ENCODE measurements at regions of chr11 and their contacts with region 1.

Region 1: GRCh38 chr11:11977206-11977938 is 31.1 kb downstream of the DKK3 start:
- DNase-seq: peak; percentile 86
- H3K4me3 Mint-ChIP-seq: peak overlapping the region; percentile 53
- H3K27ac Mint-ChIP-seq: peak overlapping the region; percentile 86
- H3K4me1 Mint-ChIP-seq: peaks cover 39% of the 10 kb centered on the region
- H3K27me3 Mint-ChIP-seq: no peaks in the 10 kb centered on the region
- CTCF ChIP-seq: no peak

Region 2: GRCh38 chr11:11894486-11894885 is 82.9 kb before region 1 on chr11:
- CTCF ChIA-PET with region 1: no interaction called
- POLR2A ChIA-PET with region 1: no interaction called
- intact Hi-C with region 1: no loop called
- DNase-seq: no peak
- H3K4me3 Mint-ChIP-seq: no peak overlapping the region
- H3K27ac Mint-ChIP-seq: no peak overlapping the region
- H3K4me1 Mint-ChIP-seq: peaks cover 7% of the 10 kb centered on the region
- H3K27me3 Mint-ChIP-seq: no peaks in the 10 kb centered on the region
- CTCF ChIP-seq: no peak

Region 3: GRCh38 chr11:11966826-11967668 is 10.3 kb before region 1 on chr11:
- CTCF ChIA-PET with region 1: interaction called, 18 read pairs
- POLR2A ChIA-PET with region 1: interaction called, 3 read pairs
- intact Hi-C with region 1: no loop called
- DNase-seq: peak; percentile 75
- H3K4me3 Mint-ChIP-seq: no peak overlapping the region
- H3K27ac Mint-ChIP-seq: no peak overlapping the region
- H3K4me1 Mint-ChIP-seq: peaks cover 5% of the 10 kb centered on the region
- H3K27me3 Mint-ChIP-seq: no peaks in the 10 kb centered on the region
- CTCF ChIP-seq: peak; percentile 79

Region 4: GRCh38 chr11:11993839-11994238 is 16.5 kb after region 1 on chr11:
- CTCF ChIA-PET with region 1: interaction called, 6 read pairs
- POLR2A ChIA-PET with region 1: interaction called, 20 read pairs
- intact Hi-C with region 1: no loop called
- DNase-seq: peak; percentile 93
- H3K4me3 Mint-ChIP-seq: peak overlapping the region; percentile 42
- H3K27ac Mint-ChIP-seq: peak overlapping the region; percentile 84
- H3K4me1 Mint-ChIP-seq: peaks cover 49% of the 10 kb centered on the region
- H3K27me3 Mint-ChIP-seq: no peaks in the 10 kb centered on the region
- CTCF ChIP-seq: no peak